T-cell (primary cell): ENCODE measurements at regions of chr17 and their contacts with region 1.

Region 1: GRCh38 chr17:81494626-81495385 is 17.8 kb downstream of the ACTG1 start:
- DNase-seq: no peak
- ATAC-seq: peak in 1 of 4 experiments; percentile 43
- H3K4me3 ChIP-seq: no peak overlapping the region
- H3K4me3 Mint-ChIP-seq: no peak overlapping the region
- H3K27ac ChIP-seq: no peak overlapping the region
- H3K27ac Mint-ChIP-seq: no peak overlapping the region
- H3K4me1 ChIP-seq: peaks cover 0 to 3% of the 10 kb centered on the region in 2 experiments
- H3K4me1 Mint-ChIP-seq: peaks cover 0 to 6% (median 0%) of the 10 kb centered on the region in 3 donors
- H3K27me3 ChIP-seq: peaks cover 0 to 47% of the 10 kb centered on the region in 2 experiments
- H3K27me3 Mint-ChIP-seq: peaks cover 0 to 4% of the 10 kb centered on the region in 2 donors

Region 2: GRCh38 chr17:81170727-81171494 is 323.9 kb before region 1 on chr17:
- CTCF ChIA-PET with region 1: no interaction called
- POLR2A ChIA-PET with region 1: interaction called in 1 of 2 experiments, 13 read pairs
- DNase-seq: no peak
- ATAC-seq: no peak
- H3K4me3 ChIP-seq: no peak overlapping the region
- H3K4me3 Mint-ChIP-seq: no peak overlapping the region
- H3K27ac ChIP-seq: no peak overlapping the region
- H3K27ac Mint-ChIP-seq: no peak overlapping the region
- H3K4me1 ChIP-seq: peaks cover 0 to 5% of the 10 kb centered on the region in 2 experiments
- H3K4me1 Mint-ChIP-seq: peaks cover 0 to 4% (median 1%) of the 10 kb centered on the region in 3 donors
- H3K27me3 ChIP-seq: peaks cover 0 to 34% of the 10 kb centered on the region in 2 experiments
- H3K27me3 Mint-ChIP-seq: peaks cover 5 to 11% of the 10 kb centered on the region in 2 donors

Region 3: DNA sequence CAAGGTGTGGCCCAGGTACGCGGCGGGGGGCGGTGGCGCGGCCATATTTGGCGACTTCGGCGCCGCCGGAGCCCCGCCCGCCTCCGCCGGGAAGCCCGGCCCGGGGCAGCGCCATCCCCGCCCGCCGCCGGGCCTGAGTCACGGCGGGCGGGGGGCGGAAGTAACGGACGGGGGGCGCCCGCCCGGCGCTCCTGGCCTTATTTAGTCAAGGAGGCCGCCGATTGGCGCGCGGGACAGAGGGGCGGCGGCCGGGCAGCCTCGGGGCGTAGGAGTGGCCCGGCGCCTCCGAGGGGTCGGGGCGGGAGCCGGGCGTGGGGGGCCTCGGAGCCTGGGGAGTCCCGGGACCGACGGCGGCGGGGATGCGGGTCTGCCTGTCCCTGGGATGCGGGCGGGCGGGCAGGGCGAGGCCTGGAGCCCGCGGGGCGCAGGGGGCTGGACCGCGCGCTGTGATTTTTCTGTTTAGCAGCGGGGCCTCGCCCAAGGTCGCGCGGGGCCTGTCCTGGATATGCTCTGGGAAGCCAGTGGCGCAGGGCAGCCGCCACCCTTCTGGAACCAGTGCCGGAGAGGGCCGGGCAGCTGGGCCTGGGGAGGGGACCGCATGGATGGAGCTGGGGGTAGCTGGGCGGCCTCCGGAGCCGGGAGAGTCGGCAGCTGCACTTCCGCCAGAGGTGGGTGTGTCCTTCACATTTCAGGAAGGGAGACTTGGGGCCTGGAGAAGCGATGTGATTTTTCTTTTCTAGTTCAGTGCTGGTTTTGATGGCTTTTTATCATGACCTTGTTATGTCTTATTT is 20.1 kb after region 1 on chr17:
- CTCF ChIA-PET with region 1: no interaction called
- POLR2A ChIA-PET with region 1: no interaction called
- DNase-seq: peak in 18 of 35 experiments; percentile 24 to 75 (median 43)
- ATAC-seq: peak; percentile 21 to 42 (median 32)
- H3K4me3 ChIP-seq: peak overlapping the region; percentile 59 to 66
- H3K4me3 Mint-ChIP-seq: peak overlapping the region; percentile 83 to 98 (median 86)
- H3K27ac ChIP-seq: peak overlapping the region; percentile 78
- H3K27ac Mint-ChIP-seq: peak overlapping the region; percentile 93 to 94
- H3K4me1 ChIP-seq: peaks cover 17 to 83% of the 10 kb centered on the region in 2 experiments
- H3K4me1 Mint-ChIP-seq: peaks cover 31 to 45% (median 40%) of the 10 kb centered on the region in 3 donors
- H3K27me3 ChIP-seq: no peaks in the 10 kb centered on the region
- H3K27me3 Mint-ChIP-seq: no peaks in the 10 kb centered on the region